Dorsolateral prefrontal cortex (tissue), 120 donors: ENCODE measurements at regions of chr20 and their contacts with region 1.

Region 1: DNA sequence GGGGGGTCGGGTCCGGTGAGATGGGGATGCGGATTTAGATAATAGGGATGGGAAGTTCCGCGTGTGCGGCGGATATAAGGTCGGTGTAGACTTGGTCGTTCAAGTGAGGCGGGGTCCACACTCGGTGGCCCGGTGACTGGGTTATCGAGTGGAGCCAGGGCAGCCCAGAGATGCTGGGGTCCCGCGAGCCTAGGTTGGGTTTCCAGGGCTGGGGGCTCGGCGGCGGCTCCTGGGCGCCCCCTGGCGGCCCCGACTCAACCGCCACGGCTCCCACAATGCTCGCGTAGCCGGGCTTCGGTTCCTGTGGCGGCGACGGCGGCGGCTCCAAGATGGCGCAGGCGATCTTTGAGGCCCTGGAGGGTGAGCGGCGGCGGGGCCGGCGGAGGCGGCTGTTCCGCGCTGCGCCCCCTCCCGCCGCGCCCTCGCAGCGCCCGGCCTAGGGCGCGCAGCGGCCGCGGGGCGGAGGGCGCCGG is at the start of gene ZNF341:
- DNase-seq: peak; percentile 79 to 92 (median 87)
- H3K4me3 ChIP-seq: peak within 1 kb of the TSS; percentile 46 to 80 (median 68)
- H3K27ac ChIP-seq: peak within 1 kb of the TSS; percentile 92 to 99 (median 98)
- H3K27me3 ChIP-seq: no peaks in the 10 kb centered on the region
- CTCF ChIP-seq: peak; percentile 55 to 95 (median 81)
- total RNA-seq, gene ZNF341: 4.5 to 12.8 (median 7.9) TPM

Region 2: DNA sequence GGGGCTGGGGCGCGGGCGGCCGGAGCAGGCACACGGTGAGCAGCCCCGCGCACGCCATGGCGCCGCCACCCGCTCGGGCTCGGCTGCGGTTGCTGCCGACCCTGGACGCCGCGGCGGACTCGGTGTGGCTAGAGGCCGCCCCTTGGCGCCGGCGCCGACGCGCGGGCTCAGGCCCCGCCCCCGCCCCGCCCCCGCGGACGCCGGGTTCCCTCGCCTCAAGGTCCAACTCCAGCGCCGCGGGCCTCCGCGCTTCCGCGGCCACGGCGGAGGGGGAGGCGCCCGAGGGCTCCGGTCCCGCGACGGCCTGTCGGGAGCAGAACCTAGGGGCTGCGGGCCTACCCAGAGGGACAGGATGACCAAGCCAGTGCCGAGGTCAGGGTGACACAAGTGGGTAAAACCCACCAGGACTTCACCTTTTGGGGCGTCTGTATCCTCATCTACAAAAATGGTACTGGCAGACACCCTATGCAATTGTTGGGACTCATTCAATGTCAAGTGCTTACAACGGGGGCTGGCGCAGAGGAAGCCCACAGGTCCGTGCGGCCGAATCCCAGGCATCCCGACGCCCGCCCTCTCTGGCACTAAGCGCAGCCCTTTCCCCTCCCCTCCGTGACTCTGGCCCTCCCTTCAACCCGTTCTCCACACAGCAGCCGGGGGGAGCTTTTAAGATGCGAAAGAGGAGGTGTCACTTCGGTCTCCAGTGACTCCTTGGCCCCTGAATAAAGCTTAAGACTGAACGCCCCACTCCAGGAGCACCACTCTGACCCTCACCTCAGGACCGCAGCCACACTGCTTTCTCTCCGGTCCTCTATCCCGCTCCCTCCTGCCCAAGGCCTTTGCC is 57.2 kb before region 1 on chr20 and contains the start of gene NECAB3:
- intact Hi-C with region 1: loop called in 1 of 2 experiments (anchors 5 kb)
- DNase-seq: peak; percentile 68 to 91 (median 78)
- H3K4me3 ChIP-seq: peak within 1 kb of the TSS; percentile 60 to 92 (median 77)
- H3K27ac ChIP-seq: peak within 1 kb of the TSS; percentile 58 to 96 (median 91)
- H3K27me3 ChIP-seq: no peaks in the 10 kb centered on the region
- CTCF ChIP-seq: peak in 13 of 56 donors; percentile 3 to 46 (median 17)
- total RNA-seq, gene NECAB3: 40.0 to 107 (median 69.5) TPM

Region 3: DNA sequence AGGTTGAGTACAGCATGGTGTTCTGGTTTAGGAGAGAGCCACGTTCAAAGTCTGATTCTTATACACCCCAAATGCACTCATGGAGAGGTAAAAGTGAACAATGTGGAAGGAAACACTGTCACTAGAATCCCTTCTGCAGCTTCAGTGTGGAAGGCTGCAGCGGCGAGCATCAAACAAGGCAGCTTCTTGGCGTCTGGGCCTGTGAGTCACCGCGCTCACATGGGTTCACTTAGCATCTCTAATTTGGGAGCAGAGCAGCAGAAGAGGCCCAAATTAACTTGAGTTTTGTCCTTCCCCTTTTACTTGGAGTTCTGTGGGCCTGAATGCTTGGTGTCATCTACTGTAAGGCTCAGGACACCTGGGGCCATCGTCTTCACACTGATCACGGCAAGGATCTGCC is 34.6 kb before region 1 on chr20:
- intact Hi-C with region 1: loop called in 1 of 2 experiments (anchors 2 kb)
- DNase-seq: peak in 9 of 10 donors; percentile 63 to 93 (median 85)
- H3K4me3 ChIP-seq: no peak overlapping the region
- H3K27ac ChIP-seq: peak overlapping the region; percentile 29 to 98 (median 82)
- H3K27me3 ChIP-seq: no peaks in the 10 kb centered on the region
- CTCF ChIP-seq: no peak

Region 4: GRCh38 chr20:33810885-33811777 is 79.4 kb after region 1 on chr20 and contains the start of gene CHMP4B:
- intact Hi-C with region 1: loop called (anchors 2 to 5 kb)
- DNase-seq: peak; percentile 98 to 99 (median 99)
- H3K4me3 ChIP-seq: peak within 1 kb of the TSS; percentile 66 to 100 (median 95)
- H3K27ac ChIP-seq: peak within 1 kb of the TSS in 57 of 59 donors; percentile 16 to 92 (median 83)
- H3K27me3 ChIP-seq: no peaks in the 10 kb centered on the region
- CTCF ChIP-seq: peak in 32 of 56 donors; percentile 7 to 57 (median 29)
- total RNA-seq, gene CHMP4B: 68.7 to 154 (median 115) TPM

Region 5: DNA sequence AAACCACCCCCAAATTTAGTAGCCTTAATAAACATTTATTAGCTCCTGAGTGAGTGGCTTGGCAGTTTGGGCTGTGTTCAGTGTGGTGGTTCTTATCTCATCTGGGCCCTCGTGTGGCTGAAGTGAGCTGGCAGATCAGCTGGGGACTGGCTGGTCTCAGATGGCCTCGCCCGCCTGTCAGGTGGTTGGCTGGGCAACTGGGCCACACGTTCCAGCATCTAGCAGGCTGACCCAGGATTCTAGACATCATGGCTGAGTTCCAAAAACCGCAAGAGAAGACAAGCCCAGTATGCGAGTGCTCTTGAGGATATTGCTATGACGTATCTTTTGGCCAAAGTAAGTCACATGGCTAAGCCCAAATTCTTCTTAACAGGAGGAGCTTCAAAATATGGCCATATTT is 351.4 kb after region 1 on chr20:
- intact Hi-C with region 1: no loop called
- DNase-seq: peak in 3 of 10 donors; percentile 20 to 66 (median 35)
- H3K4me3 ChIP-seq: no peak overlapping the region
- H3K27ac ChIP-seq: peak overlapping the region in 17 of 59 donors; percentile 2 to 64 (median 27)
- H3K27me3 ChIP-seq: no peaks in the 10 kb centered on the region
- CTCF ChIP-seq: no peak

Region 6: DNA sequence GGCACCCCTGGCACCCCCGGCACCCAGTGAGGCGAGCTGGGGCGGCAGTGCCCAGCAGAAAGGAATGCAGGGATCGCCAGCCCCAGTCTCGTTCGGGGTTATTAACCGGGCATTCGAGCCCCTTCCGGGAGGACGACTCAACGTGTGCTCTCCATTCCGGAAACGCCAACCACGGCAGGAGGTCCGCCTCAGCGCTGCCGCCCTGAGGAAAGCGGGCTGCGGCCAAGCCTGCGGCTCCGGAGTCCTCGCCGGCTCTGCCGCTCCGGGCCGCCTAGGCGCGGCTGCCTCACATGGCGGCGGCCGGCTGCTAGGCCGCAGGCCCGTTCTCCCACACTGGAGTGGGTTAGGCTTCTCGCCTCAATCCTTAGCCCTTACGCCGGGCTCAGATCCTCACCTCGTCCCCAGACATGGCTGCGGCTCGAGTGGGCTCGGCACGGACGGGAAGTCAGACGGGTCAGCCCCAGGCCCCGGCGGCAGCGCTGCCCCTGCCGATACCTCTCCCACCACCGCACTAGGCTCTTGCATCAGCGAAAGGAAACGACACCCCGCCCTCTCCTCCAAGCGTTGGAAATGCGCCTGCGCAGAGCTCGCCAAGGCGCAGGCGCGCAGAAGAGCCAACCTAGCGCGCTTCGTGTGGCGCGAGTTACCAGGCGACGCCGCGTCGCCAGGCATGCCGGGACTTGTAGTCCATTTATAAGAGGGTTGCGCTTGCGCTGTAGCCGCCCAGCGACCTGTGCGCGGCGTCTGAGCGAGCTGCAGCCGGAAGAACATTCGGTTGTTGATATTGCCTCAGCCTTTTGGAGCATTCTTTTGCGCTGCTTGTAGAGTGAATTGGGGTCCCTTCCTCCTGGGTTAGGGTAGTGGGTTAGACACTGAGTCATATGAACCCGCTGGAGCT is 380.2 kb after region 1 on chr20 and contains the start of gene EIF2S2:
- intact Hi-C with region 1: loop called (anchors 10 kb)
- DNase-seq: peak; percentile 81 to 94 (median 90)
- H3K4me3 ChIP-seq: peak within 1 kb of the TSS; percentile 71 to 100 (median 97)
- H3K27ac ChIP-seq: peak within 1 kb of the TSS; percentile 49 to 98 (median 92)
- H3K27me3 ChIP-seq: no peaks in the 10 kb centered on the region
- CTCF ChIP-seq: peak in 30 of 56 donors; percentile 2 to 53 (median 24)
- total RNA-seq, gene EIF2S2: 20.5 to 39.5 (median 30.6) TPM